ENCODE measurements at regions of chr2 and their contacts with region 1.

Region 1: GRCh38 chr2:12293874-12294273 is 422.9 kb upstream of the TRIB2 start:
- DNase-seq: no peak
- ATAC-seq: peak; percentile 93
- H3K4me3 Mint-ChIP-seq: no peak overlapping the region
- H3K27ac Mint-ChIP-seq: peak overlapping the region; percentile 66
- H3K4me1 Mint-ChIP-seq: peaks cover 46% of the 10 kb centered on the region
- H3K27me3 Mint-ChIP-seq: peaks cover 27% of the 10 kb centered on the region

Region 2: DNA sequence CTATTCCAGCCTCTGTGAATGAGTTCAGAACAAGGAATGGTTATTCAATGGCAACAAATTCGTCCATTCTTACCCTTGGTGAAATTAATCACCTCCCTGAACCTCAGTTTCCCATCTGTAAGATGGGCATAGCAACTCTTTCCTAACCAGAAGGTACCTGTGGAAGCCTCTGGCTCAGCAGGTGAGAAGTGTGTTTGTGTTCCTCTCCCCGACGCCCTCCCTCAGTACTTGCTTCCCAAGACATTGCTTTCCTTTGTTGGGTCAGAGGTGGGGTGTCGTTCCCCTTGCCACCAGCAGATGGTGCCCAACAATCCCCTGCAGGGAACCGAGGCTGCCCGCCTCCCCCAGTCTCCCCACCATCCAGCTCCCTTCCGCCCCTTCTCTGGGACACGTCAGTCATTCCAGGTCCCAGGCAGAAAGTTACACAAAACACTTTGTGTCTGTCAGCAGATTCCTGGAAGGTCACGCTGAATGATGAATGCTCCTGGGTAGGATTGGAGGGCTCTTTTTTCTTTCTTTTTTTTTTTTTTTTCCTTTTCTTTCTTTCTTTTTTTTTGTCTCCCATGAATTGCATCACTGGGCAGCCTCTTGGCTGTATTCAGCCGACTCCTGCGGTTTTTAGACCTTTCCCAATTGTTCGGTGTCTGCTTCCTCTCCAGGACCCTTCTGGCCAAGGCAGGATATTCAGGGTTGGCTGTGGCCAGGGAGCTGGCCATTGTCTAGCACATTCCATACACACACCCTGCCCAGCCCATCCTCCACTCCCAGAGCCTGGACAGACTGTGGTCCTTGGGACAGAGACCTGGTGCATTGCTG is 430.2 kb before region 1 on chr2:
- CTCF ChIA-PET with region 1: no interaction called
- POLR2A ChIA-PET with region 1: no interaction called
- intact Hi-C with region 1: loop called in 1 of 2 experiments (anchors 10 kb)
- DNase-seq: peak; percentile 80
- ATAC-seq: peak; percentile 49
- H3K4me3 Mint-ChIP-seq: peak overlapping the region; percentile 11
- H3K27ac Mint-ChIP-seq: no peak overlapping the region
- H3K4me1 Mint-ChIP-seq: peaks cover 29% of the 10 kb centered on the region
- H3K27me3 Mint-ChIP-seq: peaks cover 13% of the 10 kb centered on the region

Region 3: GRCh38 chr2:12076810-12077209 is 217.1 kb before region 1 on chr2:
- CTCF ChIA-PET with region 1: no interaction called
- POLR2A ChIA-PET with region 1: no interaction called
- intact Hi-C with region 1: loop called in 1 of 2 experiments (anchors 5 kb)
- DNase-seq: peak; percentile 9
- ATAC-seq: peak; percentile 63
- H3K4me3 Mint-ChIP-seq: no peak overlapping the region
- H3K27ac Mint-ChIP-seq: no peak overlapping the region
- H3K4me1 Mint-ChIP-seq: peaks cover 18% of the 10 kb centered on the region
- H3K27me3 Mint-ChIP-seq: peaks cover 2% of the 10 kb centered on the region

Region 4: GRCh38 chr2:12270876-12271588 is 22.8 kb before region 1 on chr2:
- CTCF ChIA-PET with region 1: interaction called, 5 read pairs
- POLR2A ChIA-PET with region 1: interaction called, 3 read pairs
- intact Hi-C with region 1: loop called (anchors 1 kb)
- DNase-seq: peak; percentile 45
- ATAC-seq: peak; percentile 98
- H3K4me3 Mint-ChIP-seq: no peak overlapping the region
- H3K27ac Mint-ChIP-seq: no peak overlapping the region
- H3K4me1 Mint-ChIP-seq: peaks cover 12% of the 10 kb centered on the region
- H3K27me3 Mint-ChIP-seq: no peaks in the 10 kb centered on the region

Region 5: DNA sequence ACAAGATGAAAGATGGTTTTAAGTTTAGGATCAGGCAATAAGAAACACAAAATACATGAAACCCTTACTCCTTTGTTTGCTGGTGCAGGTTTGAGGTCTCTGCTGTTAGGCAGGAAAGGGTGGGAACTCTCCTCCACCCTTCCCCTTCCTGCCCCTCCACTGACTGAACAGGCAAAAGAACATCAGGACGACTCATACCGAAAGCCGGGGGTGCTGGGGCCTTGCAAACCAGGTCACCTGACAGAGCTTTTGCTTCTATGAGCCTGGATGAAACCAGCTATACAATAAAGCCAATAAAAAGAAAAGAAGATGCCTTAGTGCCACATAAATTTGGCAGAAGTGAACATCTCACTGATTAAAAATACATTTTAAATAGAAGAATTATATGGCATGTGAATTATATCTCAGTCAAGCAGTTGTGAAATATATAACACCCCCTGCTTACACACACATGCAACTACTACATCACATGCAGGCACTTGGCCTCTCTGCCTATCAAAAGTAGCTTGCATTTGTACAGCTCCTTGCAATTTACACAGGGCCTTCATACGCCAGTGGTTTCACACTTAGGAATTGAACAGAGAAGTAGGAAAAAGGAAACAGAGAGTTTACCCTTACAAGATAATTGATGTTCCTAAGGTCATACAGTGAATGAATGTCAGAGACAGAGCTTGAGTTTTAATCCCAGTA is 207.7 kb after region 1 on chr2:
- CTCF ChIA-PET with region 1: no interaction called
- POLR2A ChIA-PET with region 1: no interaction called
- intact Hi-C with region 1: loop called (anchors 1 to 5 kb)
- DNase-seq: peak; percentile 87
- ATAC-seq: peak; percentile 77
- H3K4me3 Mint-ChIP-seq: no peak overlapping the region
- H3K27ac Mint-ChIP-seq: peak overlapping the region; percentile 62
- H3K4me1 Mint-ChIP-seq: peaks cover 94% of the 10 kb centered on the region
- H3K27me3 Mint-ChIP-seq: no peaks in the 10 kb centered on the region

Region 6: GRCh38 chr2:12702305-12703121 is 408.6 kb after region 1 on chr2:
- CTCF ChIA-PET with region 1: no interaction called
- POLR2A ChIA-PET with region 1: no interaction called
- intact Hi-C with region 1: loop called in 1 of 2 experiments (anchors 5 kb)
- DNase-seq: no peak
- ATAC-seq: peak; percentile 86
- H3K4me3 Mint-ChIP-seq: no peak overlapping the region
- H3K27ac Mint-ChIP-seq: no peak overlapping the region
- H3K4me1 Mint-ChIP-seq: peaks cover 37% of the 10 kb centered on the region
- H3K27me3 Mint-ChIP-seq: no peaks in the 10 kb centered on the region